Activated CD4-positive, alpha-beta T cell treated with anti-CD3 and anti-CD28 coated beads for 36 hours (primary cell): ENCODE measurements at regions of chr1 and their contacts with region 1.

Region 1: DNA sequence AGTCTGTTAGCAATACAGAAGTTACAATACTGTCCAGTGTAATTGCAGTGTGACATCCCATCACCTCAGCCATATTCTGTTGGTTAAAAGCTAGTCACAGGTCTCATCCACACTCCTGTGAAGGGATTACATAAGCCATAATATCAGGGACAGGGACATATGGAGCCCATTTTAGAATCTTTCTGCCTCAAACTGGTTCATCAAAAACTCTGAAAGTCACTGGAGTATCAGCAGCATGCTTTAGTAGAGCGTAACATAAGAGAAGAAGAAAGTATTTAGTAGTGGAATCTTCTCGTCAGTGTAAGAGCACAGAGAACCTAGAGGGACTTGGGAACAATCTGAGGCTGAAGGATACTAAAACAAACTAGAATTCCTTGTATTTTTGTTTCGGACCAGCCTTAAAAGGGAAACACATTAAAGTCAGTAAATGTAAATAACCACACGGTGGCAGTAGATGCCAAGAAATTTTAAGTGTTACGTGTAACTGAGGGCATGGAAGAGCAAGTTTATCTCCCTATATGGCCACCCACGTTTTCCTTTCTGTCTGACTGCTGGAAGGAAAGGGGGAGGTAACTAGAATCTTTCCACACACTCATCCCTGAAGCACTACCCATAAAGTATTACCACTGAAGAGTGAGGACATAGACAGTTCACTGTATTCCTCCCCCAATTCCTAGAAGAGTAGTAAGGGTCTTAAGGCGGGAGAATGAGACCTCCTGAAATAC is 41.6 kb upstream of the AGL start:
- DNase-seq: peak; percentile 47
- ATAC-seq: peak; percentile 93
- H3K4me3 Mint-ChIP-seq: no peak overlapping the region
- H3K27ac Mint-ChIP-seq: peak overlapping the region; percentile 75
- H3K4me1 Mint-ChIP-seq: peaks cover 11% of the 10 kb centered on the region
- H3K27me3 Mint-ChIP-seq: peaks cover 9% of the 10 kb centered on the region

Region 2: DNA sequence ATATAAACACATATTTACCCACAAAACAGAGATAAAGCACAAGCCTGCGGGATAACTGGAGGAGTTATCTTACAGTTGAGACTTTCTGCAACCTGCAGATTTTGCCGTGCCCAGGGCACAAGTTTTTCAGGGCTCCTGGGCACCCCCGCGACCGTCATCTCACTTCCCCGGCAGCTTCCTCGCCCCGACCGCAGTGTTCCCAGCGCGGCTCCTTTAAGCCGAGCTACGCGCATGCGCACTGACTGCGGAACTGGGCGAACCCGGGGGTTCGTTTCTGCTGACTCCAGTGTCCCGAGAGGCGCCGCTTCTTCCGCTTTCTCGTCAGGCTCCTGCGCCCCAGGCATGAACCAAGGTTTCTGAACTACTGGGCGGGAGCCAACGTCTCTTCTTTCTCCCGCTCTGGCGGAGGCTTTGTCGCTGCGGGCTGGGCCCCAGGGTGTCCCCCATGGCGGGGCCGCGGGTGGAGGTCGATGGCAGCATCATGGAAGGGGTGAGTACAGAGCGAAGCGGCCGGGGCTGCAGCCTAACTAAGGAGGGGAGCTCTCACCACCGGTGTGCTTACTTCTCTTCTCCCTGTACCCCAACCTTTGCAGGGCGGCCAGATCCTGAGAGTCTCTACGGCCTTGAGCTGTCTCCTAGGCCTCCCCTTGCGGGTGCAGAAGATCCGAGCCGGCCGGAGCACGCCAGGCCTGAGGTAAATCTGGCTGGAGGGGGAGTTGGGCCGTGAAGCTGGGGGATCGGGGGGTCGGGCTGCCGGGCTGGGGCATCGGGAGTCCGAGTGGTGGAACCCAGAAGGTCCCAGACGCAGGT is 457.6 kb after region 1 on chr1 and contains the start of gene RTCA:
- CTCF ChIA-PET with region 1: no interaction called
- POLR2A ChIA-PET with region 1: no interaction called
- intact Hi-C with region 1: loop called (anchors 5 kb)
- DNase-seq: peak; percentile 97
- ATAC-seq: peak; percentile 93
- H3K4me3 Mint-ChIP-seq: peak within 1 kb of the TSS; percentile 100
- H3K27ac Mint-ChIP-seq: peak within 1 kb of the TSS; percentile 99
- H3K4me1 Mint-ChIP-seq: peaks cover 32% of the 10 kb centered on the region
- H3K27me3 Mint-ChIP-seq: no peaks in the 10 kb centered on the region
- total RNA-seq, gene RTCA: 47.8 to 53.0 TPM

Region 3: DNA sequence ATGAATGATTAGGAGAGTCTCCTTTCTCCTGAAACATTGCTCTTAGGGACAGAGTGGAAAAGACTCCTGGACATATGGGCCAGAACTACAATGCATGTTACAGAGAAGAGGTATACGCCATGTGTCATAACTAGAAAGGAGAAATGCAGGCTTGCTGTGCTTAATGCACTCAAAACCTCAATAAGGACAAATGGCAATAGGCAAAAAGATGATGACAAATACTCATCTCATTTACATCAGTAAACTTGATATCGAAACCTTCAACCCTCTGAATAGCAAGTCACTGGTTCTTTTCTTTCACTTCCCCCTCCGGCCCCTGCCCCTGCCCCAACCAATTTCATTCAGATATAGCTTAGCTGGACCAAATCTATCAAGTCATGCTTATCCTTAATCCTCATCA is 727.5 kb after region 1 on chr1:
- CTCF ChIA-PET with region 1: no interaction called
- POLR2A ChIA-PET with region 1: no interaction called
- intact Hi-C with region 1: loop called in 1 of 2 experiments (anchors 2 kb)
- DNase-seq: no peak
- ATAC-seq: peak; percentile 4
- H3K4me3 Mint-ChIP-seq: no peak overlapping the region
- H3K27ac Mint-ChIP-seq: no peak overlapping the region
- H3K4me1 Mint-ChIP-seq: peaks cover 24% of the 10 kb centered on the region
- H3K27me3 Mint-ChIP-seq: peaks cover 40% of the 10 kb centered on the region